ENCODE measurements at regions of chr2 and their contacts with region 1.

Region 1: DNA sequence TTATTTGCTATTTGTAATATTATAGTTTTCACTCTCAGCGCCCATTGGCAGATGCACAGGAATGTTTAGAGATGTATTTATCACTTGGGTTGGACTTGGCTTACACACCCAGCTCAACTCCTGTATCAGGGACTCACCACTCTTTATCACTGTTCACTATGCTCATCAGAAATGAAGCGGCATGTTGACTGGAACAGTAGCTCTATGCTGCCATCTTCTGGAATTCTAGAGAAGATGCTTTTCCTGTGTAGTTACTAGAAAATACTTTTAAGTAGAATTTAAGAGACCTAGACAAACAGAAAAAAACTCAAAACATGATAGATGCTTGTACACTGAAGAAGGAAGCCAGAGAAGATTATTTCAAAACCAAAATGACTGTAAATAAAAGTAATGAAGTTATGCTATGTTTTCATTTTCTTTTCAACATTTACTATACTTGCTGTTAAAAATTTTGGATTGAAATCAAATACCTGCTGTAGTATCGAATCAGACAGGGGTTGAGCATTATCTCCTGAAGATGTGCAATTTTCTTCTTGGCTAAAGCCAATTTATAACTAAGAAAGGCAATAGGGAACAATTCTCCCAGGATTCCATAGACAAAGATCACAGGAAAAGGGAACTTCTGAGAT is 47.4 kb upstream of the NXPH2 start:
- DNase-seq: peak; percentile 54
- ATAC-seq: no peak
- H3K4me3 ChIP-seq: no peak overlapping the region
- H3K4me3 Mint-ChIP-seq: no peak overlapping the region
- H3K27ac ChIP-seq: no peak overlapping the region
- H3K27ac Mint-ChIP-seq: no peak overlapping the region
- H3K4me1 ChIP-seq: no peaks in the 10 kb centered on the region
- H3K4me1 Mint-ChIP-seq: no peaks in the 10 kb centered on the region
- H3K27me3 ChIP-seq: no peaks in the 10 kb centered on the region
- H3K27me3 Mint-ChIP-seq: peaks cover 10% of the 10 kb centered on the region
- CTCF ChIP-seq: peak; percentile 86

Region 2: GRCh38 chr2:137865954-137866540 is 961.5 kb before region 1 on chr2:
- CTCF ChIA-PET with region 1: interaction called, 34 read pairs
- POLR2A ChIA-PET with region 1: no interaction called
- intact Hi-C with region 1: loop called (anchors 1 kb)
- DNase-seq: peak; percentile 37
- ATAC-seq: no peak
- H3K4me3 ChIP-seq: no peak overlapping the region
- H3K4me3 Mint-ChIP-seq: no peak overlapping the region
- H3K27ac ChIP-seq: no peak overlapping the region
- H3K27ac Mint-ChIP-seq: no peak overlapping the region
- H3K4me1 ChIP-seq: no peaks in the 10 kb centered on the region
- H3K4me1 Mint-ChIP-seq: no peaks in the 10 kb centered on the region
- H3K27me3 ChIP-seq: no peaks in the 10 kb centered on the region
- H3K27me3 Mint-ChIP-seq: peaks cover 12% of the 10 kb centered on the region
- CTCF ChIP-seq: peak; percentile 81

Region 3: DNA sequence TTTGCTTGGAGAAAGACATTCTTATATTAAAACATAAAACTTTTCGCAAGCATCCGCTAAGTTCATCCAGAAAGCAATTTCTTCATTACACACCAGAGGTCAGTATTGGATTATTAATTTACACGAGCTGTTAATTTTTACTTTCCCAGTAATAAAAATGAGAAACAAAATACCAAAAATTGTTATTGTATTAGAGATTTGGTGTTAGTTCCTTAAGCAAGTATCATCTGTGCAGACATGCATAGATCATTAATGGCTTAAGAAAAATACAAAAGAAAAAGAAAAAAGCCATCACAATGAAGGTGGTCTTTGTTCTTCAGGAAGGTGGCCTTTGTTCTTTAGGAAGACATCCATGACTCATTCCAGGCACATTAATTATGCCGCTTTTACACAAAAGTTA is 916.9 kb before region 1 on chr2:
- CTCF ChIA-PET with region 1: interaction called, 80 read pairs
- POLR2A ChIA-PET with region 1: no interaction called
- intact Hi-C with region 1: loop called (anchors 1 kb)
- DNase-seq: peak; percentile 13
- ATAC-seq: no peak
- H3K4me3 ChIP-seq: no peak overlapping the region
- H3K4me3 Mint-ChIP-seq: no peak overlapping the region
- H3K27ac ChIP-seq: no peak overlapping the region
- H3K27ac Mint-ChIP-seq: no peak overlapping the region
- H3K4me1 ChIP-seq: no peaks in the 10 kb centered on the region
- H3K4me1 Mint-ChIP-seq: no peaks in the 10 kb centered on the region
- H3K27me3 ChIP-seq: no peaks in the 10 kb centered on the region
- H3K27me3 Mint-ChIP-seq: peaks cover 7% of the 10 kb centered on the region
- CTCF ChIP-seq: peak; percentile 72

Region 4: GRCh38 chr2:137947728-137948336 is 879.7 kb before region 1 on chr2:
- CTCF ChIA-PET with region 1: interaction called, 23 read pairs
- POLR2A ChIA-PET with region 1: no interaction called
- intact Hi-C with region 1: loop called (anchors 1 kb)
- DNase-seq: peak; percentile 43
- ATAC-seq: no peak
- H3K4me3 ChIP-seq: no peak overlapping the region
- H3K4me3 Mint-ChIP-seq: no peak overlapping the region
- H3K27ac ChIP-seq: no peak overlapping the region
- H3K27ac Mint-ChIP-seq: no peak overlapping the region
- H3K4me1 ChIP-seq: no peaks in the 10 kb centered on the region
- H3K4me1 Mint-ChIP-seq: peaks cover 4% of the 10 kb centered on the region
- H3K27me3 ChIP-seq: no peaks in the 10 kb centered on the region
- H3K27me3 Mint-ChIP-seq: peaks cover 3% of the 10 kb centered on the region
- CTCF ChIP-seq: peak; percentile 59

Measured in B cell (primary cell).